Activated CD4-positive, alpha-beta T cell treated with anti-CD3 and anti-CD28 coated beads, Interleukin-2, amount 10 ng/mL, durations not matched to agents 24 days and 14 days (primary cell): ENCODE measurements at regions of chr2 and their contacts with region 1.

Region 1: GRCh38 chr2:28594289-28595108 is 98.6 kb downstream of the PLB1 start:
- DNase-seq: peak; percentile 95
- H3K4me3 Mint-ChIP-seq: peak overlapping the region; percentile 50
- H3K27ac Mint-ChIP-seq: peak overlapping the region; percentile 84
- H3K4me1 Mint-ChIP-seq: peaks cover 18% of the 10 kb centered on the region
- H3K27me3 Mint-ChIP-seq: no peaks in the 10 kb centered on the region

Region 2: DNA sequence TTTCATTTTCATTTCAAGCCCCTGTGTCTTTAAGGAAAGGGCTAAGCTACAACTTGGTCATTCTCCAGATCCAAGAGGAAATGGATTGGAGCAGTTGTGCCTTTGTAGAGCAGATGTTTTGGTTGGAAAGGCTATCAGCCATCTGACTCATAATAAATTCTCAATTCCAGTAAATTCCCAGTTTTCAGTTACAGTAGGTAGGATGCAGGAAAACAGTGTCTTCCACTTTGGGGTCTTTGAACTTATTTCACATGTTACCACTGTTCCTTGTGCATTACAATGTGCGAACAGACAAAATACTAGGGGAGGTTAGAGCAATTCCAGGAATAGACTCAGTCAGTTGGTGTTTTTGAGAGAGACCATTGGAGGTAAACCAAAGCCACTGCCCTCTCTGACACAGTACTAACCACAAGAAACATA is 492.0 kb before region 1 on chr2:
- intact Hi-C with region 1: no loop called
- DNase-seq: no peak
- H3K4me3 Mint-ChIP-seq: no peak overlapping the region
- H3K27ac Mint-ChIP-seq: no peak overlapping the region
- H3K4me1 Mint-ChIP-seq: peaks cover 6% of the 10 kb centered on the region
- H3K27me3 Mint-ChIP-seq: no peaks in the 10 kb centered on the region

Region 3: GRCh38 chr2:28610583-28611201 is 16.2 kb after region 1 on chr2:
- intact Hi-C with region 1: loop called (anchors 2 kb)
- DNase-seq: peak; percentile 75
- H3K4me3 Mint-ChIP-seq: peak overlapping the region; percentile 28
- H3K27ac Mint-ChIP-seq: peak overlapping the region; percentile 65
- H3K4me1 Mint-ChIP-seq: peaks cover 29% of the 10 kb centered on the region
- H3K27me3 Mint-ChIP-seq: no peaks in the 10 kb centered on the region

Region 4: DNA sequence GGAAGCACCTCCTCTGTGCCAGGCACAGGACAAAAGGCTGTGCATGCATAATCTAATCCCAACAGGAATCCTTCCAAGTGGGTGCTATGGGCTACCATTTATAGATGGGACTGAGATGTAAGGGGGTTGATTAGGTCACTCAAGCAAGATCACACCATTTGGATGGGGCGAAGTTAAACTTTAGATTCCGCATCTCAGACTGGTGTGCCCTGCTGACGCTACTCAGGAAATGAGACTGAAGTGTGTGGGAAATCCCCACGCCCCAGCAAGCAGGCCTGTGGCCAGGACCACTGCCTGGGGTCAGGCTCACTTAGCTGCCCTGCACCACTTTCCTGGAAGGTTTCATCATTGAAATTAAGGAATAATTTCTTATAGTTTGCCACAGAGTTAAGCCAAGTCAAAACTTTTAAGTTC is 86.7 kb after region 1 on chr2:
- intact Hi-C with region 1: loop called (anchors 1 kb)
- DNase-seq: peak; percentile 90
- H3K4me3 Mint-ChIP-seq: peak overlapping the region; percentile 73
- H3K27ac Mint-ChIP-seq: peak overlapping the region; percentile 97
- H3K4me1 Mint-ChIP-seq: peaks cover 60% of the 10 kb centered on the region
- H3K27me3 Mint-ChIP-seq: no peaks in the 10 kb centered on the region

Region 5: GRCh38 chr2:28894470-28895177 is 300.1 kb after region 1 on chr2 and contains the start of gene WDR43:
- intact Hi-C with region 1: no loop called
- DNase-seq: peak; percentile 100
- H3K4me3 Mint-ChIP-seq: peak within 1 kb of the TSS; percentile 99
- H3K27ac Mint-ChIP-seq: peak within 1 kb of the TSS; percentile 95
- H3K4me1 Mint-ChIP-seq: peaks cover 32% of the 10 kb centered on the region
- H3K27me3 Mint-ChIP-seq: no peaks in the 10 kb centered on the region
- total RNA-seq, gene WDR43: 181 and 190 TPM in 2 replicates